SK-N-SH (cell line): ENCODE measurements at regions of chr1 and their contacts with region 1.

Region 1: GRCh38 chr1:68459796-68460195 is 10.0 kb upstream of the RPE65 start:
- DNase-seq: no peak
- H3K4me3 ChIP-seq: no peak overlapping the region
- H3K27ac ChIP-seq: no peak overlapping the region
- H3K4me1 ChIP-seq: no peaks in the 10 kb centered on the region; a peak in 1 of 4 replicates
- H3K27me3 ChIP-seq: no peaks in the 10 kb centered on the region
- CTCF ChIP-seq: no peak
- EP300 ChIP-seq: no peak
- RAD21 ChIP-seq: no peak

Region 2: DNA sequence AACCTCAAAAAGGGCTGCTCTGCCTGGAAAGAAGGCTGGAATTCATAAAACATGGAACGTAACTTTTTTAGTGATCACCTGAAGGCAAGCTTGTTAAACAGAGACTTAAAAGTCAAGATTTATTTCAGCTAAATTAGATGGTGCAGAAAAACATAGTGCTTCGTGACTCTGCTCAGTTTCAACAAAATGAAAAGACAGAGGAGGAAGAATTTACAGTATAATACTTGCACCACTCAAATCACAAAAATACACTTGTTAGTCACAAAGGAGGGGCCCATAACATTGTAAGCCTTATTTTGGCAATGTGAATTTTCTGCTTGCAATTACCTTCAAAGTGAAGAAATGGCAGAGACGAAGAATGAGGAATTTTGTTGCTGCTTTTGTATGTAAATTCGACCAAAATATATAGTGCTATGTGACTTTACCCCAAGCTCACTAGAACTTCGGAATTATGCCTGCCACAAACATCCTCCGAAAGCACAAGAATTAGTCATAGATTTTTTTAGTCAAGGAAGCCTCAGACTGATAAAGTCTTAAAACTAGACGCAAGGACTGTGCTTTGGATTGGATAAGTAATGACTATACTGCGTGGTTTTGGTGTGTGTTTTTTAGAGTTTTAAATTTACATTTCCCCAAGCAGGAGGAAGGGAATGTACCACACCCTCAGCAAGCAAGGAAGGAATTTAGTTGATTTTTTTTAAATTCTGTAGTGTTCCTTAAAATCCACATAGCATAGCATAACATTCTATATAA is 238.0 kb before region 1 on chr1:
- CTCF ChIA-PET with region 1: no interaction called
- POLR2A ChIA-PET with region 1: no interaction called
- DNase-seq: no peak
- H3K4me3 ChIP-seq: no peak overlapping the region
- H3K27ac ChIP-seq: peak overlapping the region in 1 of 2 experiments; percentile 31; a peak in 1 of 4 replicates
- H3K4me1 ChIP-seq: peaks cover 2 to 25% of the 10 kb centered on the region in 2 experiments; a peak in 3 of 4 replicates
- H3K27me3 ChIP-seq: no peaks in the 10 kb centered on the region
- CTCF ChIP-seq: no peak
- EP300 ChIP-seq: no peak
- RAD21 ChIP-seq: no peak

Region 3: DNA sequence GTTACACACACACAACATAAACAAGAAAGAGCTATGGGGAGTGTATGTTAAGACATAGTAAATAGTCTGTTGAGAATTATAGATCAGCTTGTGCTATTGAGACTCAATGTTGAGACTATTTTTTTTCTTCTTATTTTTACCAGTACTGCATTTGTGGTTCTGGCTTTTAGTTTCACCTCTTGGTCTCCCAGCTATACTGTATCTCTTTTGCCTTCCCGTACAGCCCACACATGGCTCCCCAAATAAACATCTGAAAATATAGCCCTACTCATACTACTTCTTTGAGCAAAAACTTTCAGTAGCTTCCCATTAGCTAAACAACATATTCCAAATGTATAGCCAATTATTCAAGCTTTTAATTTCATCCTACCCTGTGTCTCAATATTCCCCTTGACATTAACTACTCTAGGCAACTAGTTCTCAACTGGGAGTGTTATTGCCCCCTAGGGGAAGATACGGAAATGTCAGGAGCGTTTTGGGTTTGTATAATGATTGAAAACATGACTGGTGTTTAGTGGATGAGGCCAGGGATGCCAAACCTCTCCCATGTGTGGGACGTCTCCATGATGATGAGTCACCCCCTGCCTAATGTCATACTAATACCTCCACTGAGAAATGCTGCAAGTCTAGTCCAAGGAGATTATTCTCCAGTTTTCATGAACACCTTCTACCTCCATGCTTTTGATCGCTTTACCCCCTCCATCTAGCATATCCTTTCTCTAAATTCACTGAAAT is 16.8 kb before region 1 on chr1:
- CTCF ChIA-PET with region 1: interaction called, 11 read pairs
- POLR2A ChIA-PET with region 1: no interaction called
- DNase-seq: peak; percentile 44
- H3K4me3 ChIP-seq: no peak overlapping the region
- H3K27ac ChIP-seq: no peak overlapping the region
- H3K4me1 ChIP-seq: no peaks in the 10 kb centered on the region
- H3K27me3 ChIP-seq: no peaks in the 10 kb centered on the region
- CTCF ChIP-seq: peak; percentile 76
- EP300 ChIP-seq: peak; percentile 15 to 32; a peak in 1 of 4 replicates
- RAD21 ChIP-seq: peak; percentile 58